Psoas muscle (tissue), 8 donors: ENCODE measurements at regions of chr19 and their contacts with region 1.

Region 1: DNA sequence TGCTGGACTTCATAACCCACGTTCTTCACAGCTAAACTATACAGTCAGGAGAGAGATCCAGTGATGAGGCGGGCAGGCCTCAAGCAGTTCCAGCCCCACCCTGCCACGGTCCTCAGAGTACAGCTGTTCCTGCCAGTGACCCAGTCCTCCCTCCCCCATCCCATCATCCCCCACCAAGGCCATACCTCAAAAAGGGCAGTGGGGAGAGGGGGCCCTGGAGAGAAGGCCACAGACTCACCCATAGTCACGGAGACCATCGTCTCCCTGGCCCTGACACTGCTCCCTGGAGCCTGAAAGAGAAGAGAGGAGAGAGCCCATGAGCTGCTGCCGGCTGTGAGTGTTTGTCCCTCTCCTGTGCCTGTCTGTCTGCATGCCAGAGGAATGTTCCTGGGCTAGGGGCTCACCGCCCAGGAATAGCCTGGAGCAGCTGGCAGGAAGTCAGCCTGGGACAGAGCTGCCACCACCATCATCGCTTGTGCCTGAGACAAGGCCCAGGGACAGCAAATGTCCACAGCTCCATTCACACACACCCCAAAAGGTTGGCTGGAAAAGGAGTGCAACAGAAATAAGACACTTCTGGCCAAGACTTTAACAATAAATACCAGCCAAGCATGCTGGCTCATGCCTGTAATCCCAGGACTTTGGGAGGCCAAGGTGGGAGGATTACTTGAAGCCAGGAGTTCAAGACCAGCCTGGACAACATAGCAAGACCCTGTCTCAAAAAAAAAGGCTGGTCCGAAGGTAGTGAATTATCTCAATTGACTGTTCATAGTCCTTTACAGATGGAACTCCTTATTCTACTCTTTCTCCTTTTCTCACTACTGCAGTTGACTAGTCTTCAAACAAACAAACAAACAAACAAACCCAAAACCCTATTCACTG is 6.4 kb downstream of the C19orf47 start:
- DNase-seq: peak; percentile 84 to 94
- ATAC-seq: peak; percentile 96 to 97 (median 96)
- H3K4me3 ChIP-seq: peak overlapping the region; percentile 49
- H3K27ac ChIP-seq: peak overlapping the region; percentile 91
- H3K4me1 ChIP-seq: peaks cover 25% of the 10 kb centered on the region
- H3K27me3 ChIP-seq: no peaks in the 10 kb centered on the region
- CTCF ChIP-seq: no peak

Region 2: GRCh38 chr19:40398417-40399131 is 56.7 kb after region 1 on chr19:
- intact Hi-C with region 1: no loop called
- DNase-seq: no peak
- ATAC-seq: peak; percentile 37 to 63 (median 51)
- H3K4me3 ChIP-seq: no peak overlapping the region
- H3K27ac ChIP-seq: no peak overlapping the region
- H3K4me1 ChIP-seq: no peaks in the 10 kb centered on the region
- H3K27me3 ChIP-seq: no peaks in the 10 kb centered on the region
- CTCF ChIP-seq: no peak

Region 3: GRCh38 chr19:40413291-40413845 is 71.5 kb after region 1 on chr19 and contains the start of gene PRX:
- intact Hi-C with region 1: loop called in 1 of 2 experiments (anchors 5 kb)
- DNase-seq: no peak
- ATAC-seq: no peak
- H3K4me3 ChIP-seq: no peak within 1 kb of the TSS
- H3K27ac ChIP-seq: peak within 1 kb of the TSS; percentile 92
- H3K4me1 ChIP-seq: peaks cover 23% of the 10 kb centered on the region
- H3K27me3 ChIP-seq: no peaks in the 10 kb centered on the region
- CTCF ChIP-seq: no peak
- total RNA-seq, gene PRX: 1.4 to 3.3 (median 2.8) TPM